Left lung (tissue), 14 donors: ENCODE measurements at regions of chr9 and their contacts with region 1.

Region 1: DNA sequence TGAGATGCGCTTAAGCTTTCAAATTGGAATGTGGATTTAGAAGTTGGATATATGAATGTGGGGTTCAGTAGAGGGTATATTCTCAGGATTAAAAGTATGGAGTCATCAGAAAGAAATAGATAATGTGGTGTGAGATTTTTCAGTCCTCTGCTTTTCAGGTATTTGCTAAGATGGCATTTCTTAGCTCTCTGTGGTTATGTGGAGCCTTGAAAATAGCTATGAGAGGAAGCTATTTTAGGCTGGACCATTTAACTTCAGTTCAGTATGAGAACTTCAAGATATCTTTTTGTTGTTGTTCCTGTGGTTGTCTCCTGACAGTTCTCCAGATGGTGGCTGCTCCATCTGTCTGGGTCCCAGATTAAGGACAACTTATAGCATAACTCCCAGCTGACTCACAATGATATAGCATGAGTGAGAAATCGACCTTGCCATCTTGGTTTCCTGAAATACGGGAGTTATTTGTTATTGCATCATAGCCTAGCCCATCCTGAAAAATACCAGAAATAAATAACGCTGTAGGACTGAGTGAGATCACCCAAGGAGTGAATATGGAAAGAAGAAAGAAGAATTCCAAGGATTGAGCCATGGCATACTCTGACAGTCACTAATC is 461.5 kb downstream of the ANXA1 start:
- DNase-seq: no peak
- ATAC-seq: no peak
- H3K4me3 ChIP-seq: no peak overlapping the region
- H3K27ac ChIP-seq: no peak overlapping the region
- H3K4me1 ChIP-seq: no peaks in the 10 kb centered on the region
- H3K27me3 ChIP-seq: no peaks in the 10 kb centered on the region
- CTCF ChIP-seq: no peak

Region 2: DNA sequence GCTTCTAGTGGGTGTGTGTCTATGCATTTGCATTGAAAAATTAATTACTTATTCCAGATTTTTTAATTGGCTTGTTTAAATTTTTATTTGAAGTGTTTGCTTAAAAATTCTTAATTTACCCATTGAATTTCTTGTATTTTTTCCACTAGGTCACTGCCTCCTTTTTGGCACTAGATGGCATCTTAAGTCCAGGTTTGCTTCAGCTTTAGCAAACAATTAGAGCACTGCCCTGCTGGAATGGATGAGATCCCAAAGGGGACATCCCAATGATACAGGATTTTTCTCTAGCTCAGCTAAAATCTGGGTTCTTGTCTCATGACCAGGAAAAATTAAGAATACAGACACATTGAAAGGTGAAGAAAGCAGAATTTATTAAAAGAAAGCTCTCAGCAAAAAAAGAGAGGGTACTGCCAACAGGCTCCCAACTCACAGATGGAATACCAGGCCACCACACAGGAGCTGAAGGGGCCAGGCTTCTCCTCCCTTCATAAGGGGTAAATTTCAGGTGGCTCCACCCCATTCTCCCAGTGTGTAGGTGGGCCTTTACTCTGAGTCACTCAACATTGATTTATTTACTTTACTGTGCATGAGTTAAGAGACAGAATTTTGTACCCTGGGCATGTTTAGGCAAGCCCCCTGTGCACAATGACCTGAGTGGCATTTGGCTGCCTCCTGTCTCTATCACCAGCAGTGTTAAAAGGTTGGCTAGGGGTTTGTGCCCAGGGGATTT is 70.8 kb after region 1 on chr9:
- intact Hi-C with region 1: loop called in 1 of 2 experiments (anchors 10 kb)
- DNase-seq: no peak
- ATAC-seq: peak; percentile 49
- H3K4me3 ChIP-seq: no peak overlapping the region
- H3K27ac ChIP-seq: no peak overlapping the region
- H3K4me1 ChIP-seq: no peaks in the 10 kb centered on the region
- H3K27me3 ChIP-seq: no peaks in the 10 kb centered on the region
- CTCF ChIP-seq: peak in 1 of 2 donors; percentile 17